ENCODE measurements at regions of chr4 and their contacts with region 1.

Region 1: GRCh38 chr4:152500800-152501434 is 35.0 kb downstream of the FBXW7 start:
- DNase-seq: no peak
- ATAC-seq: peak; percentile 69

Region 2: DNA sequence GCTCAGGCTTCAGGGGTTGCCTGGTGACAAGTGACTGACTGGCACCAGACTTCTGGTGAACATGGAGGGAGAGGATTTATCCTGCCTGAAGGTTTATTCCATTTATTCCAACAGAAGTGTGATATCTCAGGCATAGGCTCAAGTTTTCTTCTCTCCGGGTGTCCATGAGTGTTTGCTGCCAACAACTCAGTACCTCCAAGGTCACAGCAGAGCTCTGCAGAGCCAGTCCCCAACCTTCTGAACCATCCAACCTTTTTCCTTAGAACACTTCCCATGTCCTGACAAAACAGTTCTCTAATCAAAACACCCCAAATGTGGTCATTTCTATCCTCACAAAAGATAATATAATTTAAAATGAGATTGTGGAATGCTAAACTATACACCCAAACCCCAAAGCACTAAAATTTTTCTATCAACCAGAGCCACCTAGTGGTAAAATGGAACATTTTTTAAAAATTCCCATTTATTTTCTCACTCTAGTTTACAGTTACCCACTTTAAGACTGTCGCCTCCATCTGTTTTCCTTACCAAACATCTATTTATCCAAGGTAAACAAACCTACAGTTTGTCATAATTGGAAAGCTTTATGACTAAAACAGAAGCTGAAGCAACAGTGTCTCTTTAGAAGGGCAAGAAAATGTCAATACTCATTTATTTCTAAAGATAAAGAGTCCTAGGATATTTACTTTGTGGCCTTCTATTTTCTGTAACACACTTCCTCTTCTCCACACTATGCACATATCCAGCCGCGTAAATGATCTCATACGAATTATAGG is 139.3 kb after region 1 on chr4:
- intact Hi-C with region 1: loop called (anchors 10 kb)
- DNase-seq: no peak
- ATAC-seq: peak; percentile 62

Region 3: GRCh38 chr4:152735396-152735859 is 234.5 kb after region 1 on chr4:
- intact Hi-C with region 1: loop called (anchors 10 kb)
- DNase-seq: no peak
- ATAC-seq: peak; percentile 52